WTC11 (cell line): ENCODE measurements at regions of chr11 and their contacts with region 1.

Region 1: GRCh38 chr11:44133335-44133946 is 38.0 kb downstream of the EXT2 start:
- DNase-seq: no peak
- ATAC-seq: peak; percentile 65
- H3K4me3 Mint-ChIP-seq: no peak overlapping the region
- H3K27ac Mint-ChIP-seq: no peak overlapping the region
- H3K4me1 Mint-ChIP-seq: 0 out of 2 replicates have a peak, but pooled peaks cover 2% of the 10 kb centered on the region
- H3K27me3 Mint-ChIP-seq: no peaks in the 10 kb centered on the region
- CTCF ChIP-seq: peak; percentile 39

Region 2: GRCh38 chr11:44104481-44105294 is 28.8 kb before region 1 on chr11:
- CTCF ChIA-PET with region 1: interaction called, 13 read pairs
- POLR2A ChIA-PET with region 1: no interaction called
- DNase-seq: peak; percentile 28
- ATAC-seq: peak; percentile 88
- H3K4me3 Mint-ChIP-seq: no peak overlapping the region
- H3K27ac Mint-ChIP-seq: no peak overlapping the region
- H3K4me1 Mint-ChIP-seq: peaks cover 10% of the 10 kb centered on the region; the same call in 1 of the 2 replicates
- H3K27me3 Mint-ChIP-seq: no peaks in the 10 kb centered on the region
- CTCF ChIP-seq: no peak

Region 3: DNA sequence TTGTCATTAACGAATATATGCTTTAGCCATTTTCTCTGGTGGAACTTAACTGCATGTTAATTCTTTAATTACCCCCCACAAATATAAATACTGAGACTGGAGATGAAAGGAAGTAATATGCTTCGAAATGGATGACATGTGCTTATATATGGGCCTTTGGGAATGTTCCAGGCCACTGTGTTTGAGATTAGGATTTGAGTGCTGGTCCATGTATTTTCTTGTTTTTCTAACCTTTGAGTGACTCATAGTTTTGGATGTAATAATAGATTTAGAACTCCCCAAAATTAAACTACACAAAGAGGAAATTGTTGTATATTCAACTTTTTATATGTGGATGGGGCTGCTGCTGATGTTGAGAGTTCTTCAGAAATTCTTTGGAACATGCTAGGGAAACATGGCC is 16.2 kb after region 1 on chr11:
- CTCF ChIA-PET with region 1: no interaction called
- POLR2A ChIA-PET with region 1: no interaction called
- DNase-seq: no peak
- ATAC-seq: no peak
- H3K4me3 Mint-ChIP-seq: no peak overlapping the region
- H3K27ac Mint-ChIP-seq: no peak overlapping the region
- H3K4me1 Mint-ChIP-seq: no peaks in the 10 kb centered on the region
- H3K27me3 Mint-ChIP-seq: no peaks in the 10 kb centered on the region
- CTCF ChIP-seq: no peak

Region 4: GRCh38 chr11:44190868-44191200 is 57.4 kb after region 1 on chr11:
- CTCF ChIA-PET with region 1: interaction called, 12 read pairs
- POLR2A ChIA-PET with region 1: no interaction called
- DNase-seq: no peak
- ATAC-seq: peak; percentile 71
- H3K4me3 Mint-ChIP-seq: no peak overlapping the region
- H3K27ac Mint-ChIP-seq: peak overlapping the region; percentile 93
- H3K4me1 Mint-ChIP-seq: peaks cover 27% of the 10 kb centered on the region
- H3K27me3 Mint-ChIP-seq: no peaks in the 10 kb centered on the region; the same call in 1 of the 2 replicates
- CTCF ChIP-seq: no peak

Region 5: GRCh38 chr11:44256673-44257291 is 123.3 kb after region 1 on chr11:
- CTCF ChIA-PET with region 1: interaction called, 15 read pairs
- POLR2A ChIA-PET with region 1: no interaction called
- DNase-seq: no peak
- ATAC-seq: no peak
- H3K4me3 Mint-ChIP-seq: no peak overlapping the region
- H3K27ac Mint-ChIP-seq: no peak overlapping the region
- H3K4me1 Mint-ChIP-seq: no peaks in the 10 kb centered on the region
- H3K27me3 Mint-ChIP-seq: no peaks in the 10 kb centered on the region; the same call in 1 of the 2 replicates
- CTCF ChIP-seq: no peak

Region 6: DNA sequence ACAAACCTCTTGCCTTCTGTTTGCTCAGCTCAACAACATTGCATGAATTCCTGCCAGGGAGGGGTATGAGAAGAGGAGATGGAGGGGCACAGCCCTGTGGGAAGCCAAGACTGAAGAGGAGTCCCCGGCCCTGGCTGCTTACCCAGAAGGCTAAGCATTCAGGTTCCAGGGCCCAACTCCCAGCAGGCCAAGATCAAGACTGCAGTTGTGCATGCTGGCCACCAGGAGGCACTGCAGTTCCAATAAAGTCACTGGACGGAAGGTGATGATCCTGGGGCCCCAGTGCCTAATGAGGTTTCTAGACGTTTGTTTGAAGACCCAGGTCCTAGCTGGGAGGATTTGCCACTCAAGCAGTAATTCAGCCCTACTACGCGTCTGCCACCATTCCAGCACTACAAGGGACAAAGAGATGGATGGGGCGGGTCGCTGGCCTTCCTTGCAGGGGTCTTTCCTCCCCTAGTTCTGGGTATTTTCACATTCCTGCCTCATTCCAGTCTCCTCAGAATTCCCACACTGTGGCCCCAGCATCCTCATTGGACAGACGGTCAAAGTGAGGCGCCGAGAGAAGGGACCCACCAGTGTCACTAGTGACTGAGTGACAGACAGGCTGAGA is 152.9 kb after region 1 on chr11:
- CTCF ChIA-PET with region 1: interaction called, 28 read pairs
- POLR2A ChIA-PET with region 1: no interaction called
- DNase-seq: peak; percentile 83
- ATAC-seq: peak; percentile 89
- H3K4me3 Mint-ChIP-seq: no peak overlapping the region
- H3K27ac Mint-ChIP-seq: no peak overlapping the region
- H3K4me1 Mint-ChIP-seq: peaks cover 5% of the 10 kb centered on the region; the same call in 1 of the 2 replicates
- H3K27me3 Mint-ChIP-seq: no peaks in the 10 kb centered on the region
- CTCF ChIP-seq: peak; percentile 92